Dorsolateral prefrontal cortex (tissue), 120 donors: ENCODE measurements at regions of chr5 and their contacts with region 1.

Region 1: GRCh38 chr5:139903795-139904565 is 108.4 kb downstream of the PSD2 start:
- DNase-seq: peak in 7 of 10 donors; percentile 26 to 75 (median 56)
- H3K4me3 ChIP-seq: peak overlapping the region; percentile 47 to 85 (median 71)
- H3K27ac ChIP-seq: peak overlapping the region in 54 of 59 donors; percentile 7 to 89 (median 69)
- H3K27me3 ChIP-seq: no peaks in the 10 kb centered on the region
- CTCF ChIP-seq: peak in 13 of 56 donors; percentile 4 to 38 (median 21)

Region 2: DNA sequence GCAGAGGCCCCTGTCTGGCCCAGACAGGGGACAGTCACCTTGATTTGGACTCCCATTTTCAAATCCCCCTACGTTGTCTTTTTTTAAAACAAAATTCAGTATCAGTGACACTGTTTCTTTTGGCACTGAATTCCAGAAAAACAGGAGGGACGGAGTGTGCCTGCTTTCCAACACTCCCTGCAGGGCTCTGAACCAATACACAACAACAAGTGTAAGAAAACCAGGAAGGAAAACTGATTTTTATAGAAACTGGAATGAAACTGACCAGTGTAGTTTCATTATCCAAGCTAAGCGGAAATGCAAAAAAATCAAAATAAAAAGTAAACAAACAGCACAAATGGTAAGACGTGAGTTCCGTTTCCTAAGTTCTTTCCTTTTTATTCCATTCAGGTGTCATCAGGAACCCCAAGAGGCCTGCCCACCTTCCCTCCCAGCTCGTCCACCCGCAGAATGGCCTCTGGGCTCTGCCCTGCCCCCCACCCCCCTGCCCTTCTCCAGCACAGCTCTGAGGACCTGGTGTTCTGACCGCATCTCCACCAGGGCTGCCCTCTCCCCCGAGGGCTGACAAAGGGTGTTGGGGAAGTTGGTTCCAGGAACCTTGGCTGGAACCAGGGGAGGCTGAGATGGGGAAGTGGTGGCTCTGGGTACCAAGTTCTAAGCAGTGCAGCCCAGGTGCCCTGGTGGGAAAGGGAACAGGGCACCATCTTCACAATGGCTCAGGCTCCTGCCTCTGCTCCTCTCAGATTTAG is 34.8 kb before region 1 on chr5:
- intact Hi-C with region 1: loop called in 1 of 2 experiments (anchors 5 kb)
- DNase-seq: no peak
- H3K4me3 ChIP-seq: peak overlapping the region in 8 of 59 donors; percentile 2 to 26 (median 10)
- H3K27ac ChIP-seq: peak overlapping the region in 56 of 59 donors; percentile 1 to 88 (median 72)
- H3K27me3 ChIP-seq: no peaks in the 10 kb centered on the region
- CTCF ChIP-seq: no peak